ENCODE measurements at regions of chr20 and their contacts with region 1.

Region 1: GRCh38 chr20:16801919-16802911 is 54.1 kb downstream of the OTOR start:
- ATAC-seq: peak in 6 of 8 experiments; percentile 46 to 64 (median 57)
- H3K4me3 ChIP-seq: no peak overlapping the region
- H3K27ac ChIP-seq: no peak overlapping the region
- H3K4me1 ChIP-seq: no peaks in the 10 kb centered on the region

Region 2: GRCh38 chr20:17281478-17281877 is 479.3 kb after region 1 on chr20:
- in situ Hi-C with region 1: loop called in 1 of 9 experiments (anchors 25 kb)
- ATAC-seq: peak in 1 of 8 experiments; percentile 44
- H3K4me3 ChIP-seq: no peak overlapping the region
- H3K27ac ChIP-seq: no peak overlapping the region
- H3K4me1 ChIP-seq: no peaks in the 10 kb centered on the region

Region 3: DNA sequence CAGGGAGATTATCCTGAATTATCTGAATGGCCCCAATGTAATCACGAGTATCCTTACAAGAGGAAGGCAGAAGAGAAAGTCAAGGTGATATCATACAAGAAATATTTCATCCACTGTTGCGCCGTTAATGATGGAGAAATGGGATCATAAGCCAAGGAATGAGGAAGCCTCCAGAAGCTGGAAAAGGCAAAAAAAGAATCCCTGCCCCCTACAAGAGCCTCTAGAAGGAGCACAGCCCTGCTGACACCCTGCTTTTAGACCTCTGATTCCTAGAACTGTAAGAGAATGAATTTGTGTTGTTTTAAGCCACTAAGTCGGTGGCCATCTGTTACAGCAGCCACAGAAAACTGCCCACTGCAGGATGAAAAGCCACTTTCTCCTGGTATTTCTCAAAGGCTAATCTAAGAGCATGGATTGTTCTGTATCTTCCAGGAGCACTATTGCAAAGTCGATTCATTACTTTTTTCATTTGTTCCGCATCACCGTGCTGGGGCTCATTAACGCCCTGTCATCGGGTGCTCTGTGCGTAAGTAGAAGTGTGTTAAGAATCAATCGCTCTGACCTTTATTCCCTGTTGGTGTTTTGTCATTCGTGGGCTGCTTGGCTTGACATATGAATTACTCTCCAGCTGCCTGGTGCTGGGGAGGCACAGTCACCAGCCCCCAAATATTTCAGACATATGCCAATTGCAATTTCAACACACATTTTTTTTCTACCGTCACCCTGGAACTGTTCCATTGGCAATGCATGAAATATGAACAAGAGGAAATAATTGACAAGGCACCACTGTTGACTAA is 541.6 kb after region 1 on chr20:
- in situ Hi-C with region 1: no loop called
- ATAC-seq: peak in 6 of 8 experiments; percentile 53 to 98 (median 94)
- H3K4me3 ChIP-seq: no peak overlapping the region
- H3K27ac ChIP-seq: no peak overlapping the region
- H3K4me1 ChIP-seq: peaks cover 13 to 26% of the 10 kb centered on the region in 2 donors

Region 4: GRCh38 chr20:17421493-17421892 is 619.3 kb after region 1 on chr20:
- in situ Hi-C with region 1: loop called in 6 of 9 experiments (anchors 10 to 25 kb)
- ATAC-seq: peak in 2 of 8 experiments; percentile 83 to 88
- H3K4me3 ChIP-seq: no peak overlapping the region
- H3K27ac ChIP-seq: no peak overlapping the region
- H3K4me1 ChIP-seq: peaks cover 0 to 14% of the 10 kb centered on the region in 2 donors

Region 5: GRCh38 chr20:17431621-17432364 is 629.6 kb after region 1 on chr20:
- in situ Hi-C with region 1: loop called in 7 of 9 experiments (anchors 10 to 25 kb)
- ATAC-seq: peak in 6 of 8 experiments; percentile 18 to 76 (median 40)
- H3K4me3 ChIP-seq: no peak overlapping the region
- H3K27ac ChIP-seq: no peak overlapping the region
- H3K4me1 ChIP-seq: peaks cover 0 to 4% of the 10 kb centered on the region in 2 donors

Region 6: GRCh38 chr20:17442588-17442987 is 640.4 kb after region 1 on chr20:
- in situ Hi-C with region 1: loop called in 5 of 9 experiments (anchors 10 to 25 kb)
- ATAC-seq: peak in 2 of 8 experiments; percentile 35 to 40
- H3K4me3 ChIP-seq: no peak overlapping the region
- H3K27ac ChIP-seq: no peak overlapping the region
- H3K4me1 ChIP-seq: no peaks in the 10 kb centered on the region